Left ventricle myocardium superior (tissue), 1 donor: ENCODE measurements at regions of chr18 and their contacts with region 1.

Region 1: DNA sequence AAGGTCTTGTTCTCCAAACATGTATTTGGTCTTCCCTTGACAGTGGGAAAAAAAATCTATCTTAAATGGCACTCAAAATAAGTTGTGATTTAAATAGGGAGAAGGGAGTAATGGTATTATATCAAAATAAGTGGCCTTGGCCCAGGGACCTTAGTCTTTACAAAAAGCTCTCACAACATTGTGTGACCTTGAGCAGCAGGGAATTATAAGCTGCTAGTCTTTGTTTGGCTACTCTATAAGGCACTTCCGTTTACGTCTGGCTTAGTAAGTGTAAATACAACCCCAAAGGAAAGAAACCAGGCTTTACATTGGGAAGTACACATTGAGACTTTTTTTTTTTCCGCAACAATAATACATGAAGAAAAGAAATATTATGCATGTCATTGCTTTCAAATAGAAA is 734.0 kb upstream of the LINC00305 start:
- DNase-seq: no peak
- ATAC-seq: no peak

Region 2: GRCh38 chr18:64840911-64841701 is 41.8 kb before region 1 on chr18:
- intact Hi-C with region 1: loop called (anchors 5 kb)
- DNase-seq: no peak
- ATAC-seq: no peak